Esophagus muscularis mucosa (tissue), 4 donors: ENCODE measurements at regions of chr15 and their contacts with region 1.

Region 1: DNA sequence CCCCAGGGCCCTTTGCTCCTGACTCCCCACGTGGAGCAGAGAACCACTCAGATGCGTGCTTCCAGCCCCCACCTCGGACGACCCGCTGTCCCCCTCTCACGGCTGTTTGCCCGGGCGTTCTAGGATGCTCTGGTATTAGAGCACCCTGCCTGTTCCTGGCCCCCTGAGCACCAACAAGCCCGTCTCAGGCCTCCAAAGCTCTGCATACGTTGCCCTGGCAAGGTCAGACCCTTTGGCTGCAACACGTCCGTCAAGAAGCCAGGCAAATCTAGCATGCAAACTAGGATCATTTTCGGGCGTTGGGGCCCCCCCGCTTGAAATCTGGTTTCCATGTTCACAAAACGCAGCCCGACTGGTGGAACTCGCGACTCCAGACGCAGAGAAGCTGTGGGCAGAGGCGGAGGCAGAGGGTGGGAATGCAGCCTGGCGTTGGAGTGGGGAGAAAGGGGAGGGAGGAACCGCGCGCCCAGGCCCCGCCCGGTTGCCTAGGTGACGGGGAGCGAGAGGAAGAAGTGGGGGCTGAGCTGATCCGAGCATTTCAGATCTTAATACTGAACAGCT is 86.2 kb upstream of the PIAS1 start:
- DNase-seq: no peak
- H3K4me3 ChIP-seq: peak overlapping the region; percentile 47 to 52 (median 49)
- H3K27ac ChIP-seq: peak overlapping the region; percentile 38 to 75 (median 48)
- H3K4me1 ChIP-seq: peaks cover 4 to 20% (median 19%) of the 10 kb centered on the region in 4 donors
- H3K27me3 ChIP-seq: no peaks in the 10 kb centered on the region
- CTCF ChIP-seq: peak in 1 of 3 experiments; percentile 5
- EP300 ChIP-seq: no peak
- POLR2A ChIP-seq: no peak

Region 2: GRCh38 chr15:67914537-67915460 is 53.2 kb before region 1 on chr15:
- intact Hi-C with region 1: loop called (anchors 5 kb)
- DNase-seq: peak; percentile 92
- H3K4me3 ChIP-seq: peak overlapping the region; percentile 9 to 22 (median 16)
- H3K27ac ChIP-seq: peak overlapping the region; percentile 82 to 86 (median 84)
- H3K4me1 ChIP-seq: peaks cover 39 to 62% (median 51%) of the 10 kb centered on the region in 4 donors
- H3K27me3 ChIP-seq: no peaks in the 10 kb centered on the region
- CTCF ChIP-seq: no peak
- EP300 ChIP-seq: no peak
- POLR2A ChIP-seq: no peak